Ascending aorta (tissue), 2 donors: ENCODE measurements at regions of chr1 and their contacts with region 1.

Region 1: DNA sequence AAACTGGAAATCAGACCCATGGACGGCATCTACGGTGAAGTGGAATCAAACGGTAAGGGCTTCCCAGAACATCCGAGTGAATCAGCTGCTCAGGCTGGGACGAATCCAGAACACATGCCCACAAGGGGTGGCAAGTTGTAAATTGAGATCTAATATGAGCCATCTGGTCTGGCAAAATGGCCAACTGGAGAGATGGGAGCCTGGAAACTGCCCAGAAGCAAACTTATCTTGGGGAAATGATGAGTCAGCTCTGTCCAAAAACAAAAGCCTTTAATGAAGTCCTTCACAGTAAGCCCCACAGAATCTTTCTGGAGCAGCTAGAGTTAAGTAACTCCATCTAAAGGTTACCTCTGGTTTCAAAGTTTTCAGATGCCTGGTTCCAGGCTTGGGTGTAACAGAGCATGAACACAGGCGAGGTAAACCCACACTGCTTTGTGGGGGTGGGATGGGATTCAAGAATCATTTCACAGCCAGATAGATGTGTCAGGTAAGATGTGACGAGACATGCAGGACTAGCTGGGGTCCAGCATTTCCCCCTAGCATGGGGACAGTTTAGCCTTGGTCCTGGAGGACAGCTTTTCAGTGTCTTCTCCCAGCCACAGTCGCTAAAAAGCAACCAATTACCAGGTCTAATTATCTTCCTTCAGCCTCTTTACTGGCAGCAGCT is 10.5 kb upstream of the SRP9 start:
- DNase-seq: peak in 1 of 2 donors; percentile 86
- H3K4me3 ChIP-seq: no peak overlapping the region
- H3K27ac ChIP-seq: peak overlapping the region; percentile 80 to 86
- H3K4me1 ChIP-seq: peaks cover 15 to 47% of the 10 kb centered on the region in 2 donors
- H3K27me3 ChIP-seq: no peaks in the 10 kb centered on the region
- CTCF ChIP-seq: no peak

Region 2: GRCh38 chr1:225700164-225700740 is 66.8 kb before region 1 on chr1:
- intact Hi-C with region 1: loop called (anchors 2 kb)
- DNase-seq: peak in 1 of 2 donors; percentile 90
- H3K4me3 ChIP-seq: peak overlapping the region in 1 of 2 donors; percentile 19
- H3K27ac ChIP-seq: peak overlapping the region; percentile 71 to 79
- H3K4me1 ChIP-seq: peaks cover 0 to 31% of the 10 kb centered on the region in 2 donors
- H3K27me3 ChIP-seq: no peaks in the 10 kb centered on the region
- CTCF ChIP-seq: no peak

Region 3: GRCh38 chr1:225735252-225736149 is 31.6 kb before region 1 on chr1:
- intact Hi-C with region 1: loop called (anchors 2 kb)
- DNase-seq: peak; percentile 77 to 95
- H3K4me3 ChIP-seq: peak overlapping the region in 1 of 2 donors; percentile 27
- H3K27ac ChIP-seq: peak overlapping the region; percentile 69 to 89
- H3K4me1 ChIP-seq: peaks cover 0 to 21% of the 10 kb centered on the region in 2 donors
- H3K27me3 ChIP-seq: no peaks in the 10 kb centered on the region
- CTCF ChIP-seq: no peak

Region 4: DNA sequence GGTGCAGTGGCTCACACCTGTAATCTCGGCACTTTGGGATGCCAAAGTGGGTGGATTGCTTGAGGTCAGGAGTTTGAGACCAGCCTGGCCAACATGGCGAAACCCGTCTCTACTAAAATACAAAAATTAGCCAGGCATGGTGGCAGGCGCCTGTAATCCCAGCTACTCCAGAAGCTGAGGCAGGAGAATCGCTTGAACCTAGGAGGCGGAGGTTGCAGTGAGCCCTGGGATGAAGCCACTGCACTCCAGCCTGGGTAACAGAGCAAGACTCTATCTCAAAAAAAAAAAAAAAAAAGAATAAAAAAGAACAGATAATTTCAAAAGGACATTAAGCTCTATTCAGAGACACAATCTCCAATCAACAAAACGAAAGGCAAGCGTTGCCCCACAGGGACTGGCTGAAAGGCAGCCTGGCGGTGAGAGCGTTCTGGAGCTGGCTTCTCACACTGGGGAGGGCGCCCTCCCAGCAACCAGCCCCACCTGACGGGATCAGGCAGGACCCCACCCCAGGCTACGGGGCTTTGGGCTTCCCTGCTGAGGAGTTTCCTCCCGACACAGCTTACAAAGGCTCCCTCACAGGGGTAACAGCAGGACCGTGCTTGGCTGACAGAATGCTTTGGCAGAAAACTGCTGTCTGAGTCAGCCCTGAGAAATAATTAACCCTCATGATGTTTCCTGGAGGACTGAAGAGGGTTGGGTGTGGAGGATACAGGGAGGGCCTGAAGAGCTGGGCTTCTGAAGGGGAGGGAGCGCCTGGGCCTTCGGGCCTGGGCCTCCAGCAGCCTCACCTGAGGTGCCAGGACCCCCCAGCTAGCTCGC is 20.5 kb before region 1 on chr1:
- intact Hi-C with region 1: loop called (anchors 2 kb)
- DNase-seq: peak in 1 of 2 donors; percentile 88
- H3K4me3 ChIP-seq: peak overlapping the region; percentile 62 to 68
- H3K27ac ChIP-seq: peak overlapping the region; percentile 91 to 95
- H3K4me1 ChIP-seq: peaks cover 5 to 16% of the 10 kb centered on the region in 2 donors
- H3K27me3 ChIP-seq: no peaks in the 10 kb centered on the region
- CTCF ChIP-seq: peak in 2 of 3 experiments; percentile 5 to 13